Heart left ventricle (tissue), 16 donors: ENCODE measurements at regions of chr15 and their contacts with region 1.

Region 1: GRCh38 chr15:53462651-53463050 is 296.8 kb downstream of the WDR72 start:
- DNase-seq: no peak
- ATAC-seq: no peak
- H3K4me3 ChIP-seq: no peak overlapping the region
- H3K27ac ChIP-seq: no peak overlapping the region
- H3K4me1 ChIP-seq: no peaks in the 10 kb centered on the region
- H3K27me3 ChIP-seq: no peaks in the 10 kb centered on the region
- CTCF ChIP-seq: no peak
- POLR2A ChIP-seq: no peak

Region 2: DNA sequence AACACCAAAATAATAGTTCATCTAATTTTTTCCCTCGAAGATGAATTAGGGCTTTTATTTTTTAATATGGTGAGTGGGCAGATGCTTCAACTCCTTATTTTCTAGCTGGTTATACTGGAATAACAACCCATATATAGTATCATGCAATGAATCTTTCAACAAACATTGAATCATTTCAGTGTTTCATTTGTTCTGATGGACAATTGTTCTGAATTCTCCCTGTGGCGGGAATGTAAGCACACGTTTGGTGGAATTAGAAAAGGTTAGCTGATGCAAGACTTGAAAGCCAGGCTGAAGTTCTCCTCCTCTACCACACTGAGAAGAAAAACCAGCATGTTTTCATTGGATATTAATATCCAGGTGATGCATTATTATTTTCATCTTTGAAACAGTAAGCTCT is 494.7 kb before region 1 on chr15:
- intact Hi-C with region 1: no loop called
- DNase-seq: no peak
- ATAC-seq: no peak
- H3K4me3 ChIP-seq: no peak overlapping the region
- H3K27ac ChIP-seq: no peak overlapping the region
- H3K4me1 ChIP-seq: no peaks in the 10 kb centered on the region
- H3K27me3 ChIP-seq: peaks cover 0 to 5% (median 0%) of the 10 kb centered on the region in 9 donors
- CTCF ChIP-seq: no peak
- POLR2A ChIP-seq: no peak

Region 3: DNA sequence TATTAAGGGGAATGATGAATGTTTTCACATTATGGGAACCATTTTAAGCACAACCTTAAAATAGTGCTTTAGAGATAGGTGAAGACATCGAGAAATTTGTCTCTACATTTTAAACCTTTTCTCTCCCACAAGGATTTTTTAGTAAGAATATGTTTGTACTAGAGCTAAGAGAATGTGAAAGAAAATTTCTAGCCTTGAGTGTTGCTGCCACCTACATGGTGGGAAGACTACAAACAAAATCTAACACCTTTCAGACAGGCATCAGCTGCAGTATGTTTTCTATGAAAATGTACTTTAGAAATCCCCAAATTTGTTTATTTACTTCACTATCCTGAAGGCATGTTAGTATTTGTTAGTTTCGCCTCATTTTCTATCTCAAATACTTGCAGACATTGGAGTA is 49.4 kb after region 1 on chr15:
- intact Hi-C with region 1: loop called in 1 of 10 experiments (anchors 5 kb)
- DNase-seq: no peak
- ATAC-seq: no peak
- H3K4me3 ChIP-seq: no peak overlapping the region
- H3K27ac ChIP-seq: no peak overlapping the region
- H3K4me1 ChIP-seq: no peaks in the 10 kb centered on the region
- H3K27me3 ChIP-seq: peaks cover 0 to 7% (median 0%) of the 10 kb centered on the region in 9 donors
- CTCF ChIP-seq: peak in 1 of 12 donors; percentile 13
- POLR2A ChIP-seq: no peak

Region 4: GRCh38 chr15:53569751-53570480 is 107.3 kb after region 1 on chr15:
- intact Hi-C with region 1: no loop called
- DNase-seq: no peak
- ATAC-seq: no peak
- H3K4me3 ChIP-seq: no peak overlapping the region
- H3K27ac ChIP-seq: no peak overlapping the region
- H3K4me1 ChIP-seq: no peaks in the 10 kb centered on the region
- H3K27me3 ChIP-seq: peaks cover 0 to 3% (median 0%) of the 10 kb centered on the region in 9 donors
- CTCF ChIP-seq: no peak
- POLR2A ChIP-seq: no peak